ENCODE measurements at regions of chr13 and their contacts with region 1.

Region 1: DNA sequence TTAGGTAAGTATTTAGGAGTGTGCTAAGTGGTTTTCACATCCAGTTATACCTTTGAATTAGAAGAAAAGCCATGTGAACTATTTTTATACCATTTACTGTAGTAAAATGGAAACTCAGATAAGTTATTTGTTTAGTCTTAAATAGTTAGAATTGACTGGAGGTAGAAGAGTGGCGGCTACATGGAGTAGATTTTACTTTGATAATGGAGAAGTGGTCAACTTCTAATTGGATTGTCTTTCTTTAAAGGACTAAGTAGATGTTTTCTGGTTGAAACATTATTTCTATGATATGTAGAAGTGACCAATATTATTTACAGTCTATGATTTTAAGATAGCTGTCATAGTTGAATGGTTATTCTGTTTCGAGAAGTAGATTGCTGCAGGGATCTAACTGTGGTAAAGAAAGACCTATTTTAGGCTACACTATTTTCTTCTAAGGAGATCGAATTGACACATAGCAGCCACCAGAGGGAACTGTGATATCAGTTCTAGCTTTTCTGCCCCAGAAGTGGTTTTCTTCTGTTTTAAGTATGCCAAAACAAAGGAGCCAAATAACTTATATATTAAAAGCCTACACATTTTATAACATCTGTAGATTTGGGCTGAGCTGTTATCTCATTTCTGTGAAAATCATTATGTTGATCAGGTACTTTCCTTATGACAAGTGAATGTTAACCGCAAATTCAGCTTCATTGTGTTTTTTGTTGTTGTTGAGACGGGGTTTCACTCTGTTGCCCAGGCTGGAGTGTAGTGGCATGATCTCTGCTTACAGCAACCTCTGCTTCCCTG is 26.1 kb downstream of the ZMYM2 start:
- DNase-seq: peak; percentile 32
- H3K4me3 ChIP-seq: no peak overlapping the region
- H3K27ac ChIP-seq: no peak overlapping the region
- H3K27me3 ChIP-seq: no peaks in the 10 kb centered on the region
- CTCF ChIP-seq: peak; percentile 81

Region 2: DNA sequence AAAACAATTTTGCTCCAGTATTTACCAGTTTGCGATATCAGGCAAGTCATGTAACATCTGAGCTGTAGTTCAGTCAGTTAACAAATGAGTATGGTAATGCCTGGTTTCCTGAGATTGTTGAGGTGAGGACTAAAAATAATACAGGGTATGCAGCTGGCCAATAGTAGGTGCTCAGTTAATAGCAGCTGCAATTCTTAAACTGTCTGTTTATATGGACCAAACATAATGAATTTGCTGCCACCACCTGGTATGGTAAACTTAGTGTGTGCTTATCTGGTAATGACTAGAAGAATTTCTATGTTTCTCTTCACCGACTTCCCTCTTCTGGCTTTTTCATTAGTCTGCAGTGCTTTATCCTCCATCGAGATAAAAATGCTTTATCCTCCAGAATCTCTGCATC is 17.0 kb before region 1 on chr13:
- CTCF ChIA-PET with region 1: interaction called, 28 read pairs
- POLR2A ChIA-PET with region 1: no interaction called
- DNase-seq: no peak
- H3K4me3 ChIP-seq: no peak overlapping the region
- H3K27ac ChIP-seq: no peak overlapping the region
- H3K27me3 ChIP-seq: no peaks in the 10 kb centered on the region
- CTCF ChIP-seq: no peak

Region 3: GRCh38 chr13:20000062-20000552 is 15.5 kb after region 1 on chr13:
- CTCF ChIA-PET with region 1: interaction called, 36 read pairs
- POLR2A ChIA-PET with region 1: interaction called, 6 read pairs
- DNase-seq: no peak
- H3K4me3 ChIP-seq: no peak overlapping the region
- H3K27ac ChIP-seq: no peak overlapping the region
- H3K27me3 ChIP-seq: no peaks in the 10 kb centered on the region
- CTCF ChIP-seq: no peak

Region 4: GRCh38 chr13:20006206-20006605 is 21.6 kb after region 1 on chr13:
- CTCF ChIA-PET with region 1: interaction called, 36 read pairs
- POLR2A ChIA-PET with region 1: interaction called, 6 read pairs
- DNase-seq: peak; percentile 16
- H3K4me3 ChIP-seq: no peak overlapping the region
- H3K27ac ChIP-seq: peak overlapping the region; percentile 83
- H3K27me3 ChIP-seq: no peaks in the 10 kb centered on the region
- CTCF ChIP-seq: no peak

Region 5: GRCh38 chr13:20161275-20161950 is 176.8 kb after region 1 on chr13:
- CTCF ChIA-PET with region 1: interaction called, 32 read pairs
- POLR2A ChIA-PET with region 1: interaction called, 3 read pairs
- DNase-seq: no peak
- H3K4me3 ChIP-seq: peak overlapping the region; percentile 71
- H3K27ac ChIP-seq: no peak overlapping the region
- H3K27me3 ChIP-seq: peaks cover 6% of the 10 kb centered on the region
- CTCF ChIP-seq: no peak